ENCODE measurements at regions of chr2 and their contacts with region 1.

Region 1: DNA sequence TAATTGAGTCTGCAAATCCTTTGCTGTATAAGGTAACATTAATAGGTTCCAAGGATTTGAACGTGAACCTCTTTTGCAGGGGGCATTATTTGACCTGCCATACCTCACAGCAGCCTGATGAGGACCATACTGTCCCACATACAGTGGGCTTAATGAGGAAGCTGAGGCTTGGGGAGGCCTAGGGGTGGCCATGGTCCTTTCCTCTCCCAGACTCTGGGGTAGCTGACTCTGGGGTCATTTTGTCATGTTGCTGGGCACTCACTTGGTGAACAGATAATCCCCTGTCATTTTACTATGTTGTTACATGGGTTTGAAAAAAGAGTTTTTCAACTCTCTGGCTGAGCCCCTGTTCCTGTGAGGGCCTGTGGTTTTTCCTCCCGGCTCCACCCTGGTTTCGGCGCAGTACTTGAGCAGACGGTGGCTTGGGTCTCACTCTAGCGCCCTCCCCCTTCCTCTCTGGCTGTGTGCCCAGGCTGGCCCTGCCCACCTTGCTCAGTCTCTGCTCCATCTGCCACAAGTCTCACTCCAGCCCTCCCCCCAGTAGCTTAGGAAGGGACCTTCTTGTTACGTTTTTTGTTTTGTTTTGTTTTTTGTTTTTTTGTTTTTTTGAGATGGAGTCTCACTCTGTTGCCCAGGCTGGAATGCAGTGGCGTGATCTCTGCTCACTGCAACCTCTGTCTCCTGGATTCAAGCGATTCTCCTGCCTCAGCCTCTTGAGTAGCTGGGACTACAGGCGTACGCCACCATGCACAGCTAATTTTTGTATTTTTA is 21.0 kb downstream of the INPP4A start:
- DNase-seq: peak; percentile 84 to 93 (median 84)
- H3K4me3 ChIP-seq: peak overlapping the region; percentile 17 to 33
- H3K4me3 Mint-ChIP-seq: peak overlapping the region; percentile 80 to 98 (median 90)
- H3K27ac ChIP-seq: peak overlapping the region; percentile 71
- H3K27ac Mint-ChIP-seq: peak overlapping the region; percentile 92 to 98 (median 97)
- H3K4me1 ChIP-seq: peaks cover 96% of the 10 kb centered on the region
- H3K4me1 Mint-ChIP-seq: peaks cover 71 to 93% (median 82%) of the 10 kb centered on the region in 4 donors
- H3K27me3 ChIP-seq: no peaks in the 10 kb centered on the region
- H3K27me3 Mint-ChIP-seq: no peaks in the 10 kb centered on the region

Region 2: GRCh38 chr2:97798416-97798815 is 667.2 kb before region 1 on chr2:
- CTCF ChIA-PET with region 1: no interaction called
- POLR2A ChIA-PET with region 1: no interaction called
- intact Hi-C with region 1: no loop called
- DNase-seq: no peak
- H3K4me3 ChIP-seq: no peak overlapping the region
- H3K4me3 Mint-ChIP-seq: no peak overlapping the region
- H3K27ac ChIP-seq: no peak overlapping the region
- H3K27ac Mint-ChIP-seq: no peak overlapping the region
- H3K4me1 ChIP-seq: no peaks in the 10 kb centered on the region
- H3K4me1 Mint-ChIP-seq: no peaks in the 10 kb centered on the region
- H3K27me3 ChIP-seq: no peaks in the 10 kb centered on the region
- H3K27me3 Mint-ChIP-seq: no peaks in the 10 kb centered on the region

Region 3: DNA sequence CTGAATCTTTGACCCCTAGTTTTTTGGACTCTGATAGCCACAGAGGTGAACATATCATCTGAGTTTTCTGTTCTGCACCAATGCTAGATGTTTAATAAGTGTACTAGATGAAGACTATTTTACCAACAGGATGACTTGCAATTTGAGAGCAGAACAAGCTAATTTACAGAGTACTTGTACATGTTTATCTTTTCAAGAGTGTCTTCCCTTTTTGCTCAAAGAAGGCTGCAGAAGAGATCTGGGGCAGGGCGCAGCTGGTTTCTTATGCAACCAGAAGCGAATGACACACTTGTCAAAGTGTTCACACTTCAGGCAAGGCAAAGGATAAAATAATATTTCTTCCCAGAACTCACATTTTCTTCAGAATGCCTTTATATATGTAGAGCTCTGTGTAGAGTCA is 292.7 kb before region 1 on chr2:
- CTCF ChIA-PET with region 1: no interaction called
- POLR2A ChIA-PET with region 1: no interaction called
- intact Hi-C with region 1: no loop called
- DNase-seq: no peak
- H3K4me3 ChIP-seq: no peak overlapping the region
- H3K4me3 Mint-ChIP-seq: no peak overlapping the region
- H3K27ac ChIP-seq: no peak overlapping the region
- H3K27ac Mint-ChIP-seq: no peak overlapping the region
- H3K4me1 ChIP-seq: no peaks in the 10 kb centered on the region
- H3K4me1 Mint-ChIP-seq: peaks cover 0 to 3% (median 0%) of the 10 kb centered on the region in 4 donors
- H3K27me3 ChIP-seq: no peaks in the 10 kb centered on the region
- H3K27me3 Mint-ChIP-seq: peaks cover 20 to 43% of the 10 kb centered on the region in 2 donors

Region 4: GRCh38 chr2:98455494-98455976 is 10.1 kb before region 1 on chr2:
- CTCF ChIA-PET with region 1: interaction called, 32 read pairs
- POLR2A ChIA-PET with region 1: interaction called, 338 read pairs
- intact Hi-C with region 1: loop called (anchors 1 kb)
- DNase-seq: peak; percentile 48 to 86 (median 64)
- H3K4me3 ChIP-seq: peak overlapping the region in 1 of 2 donors; percentile 18
- H3K4me3 Mint-ChIP-seq: peak overlapping the region; percentile 11 to 84 (median 69)
- H3K27ac ChIP-seq: peak overlapping the region; percentile 69
- H3K27ac Mint-ChIP-seq: peak overlapping the region; percentile 85 to 97 (median 94)
- H3K4me1 ChIP-seq: peaks cover 99% of the 10 kb centered on the region
- H3K4me1 Mint-ChIP-seq: peaks cover 80 to 100% (median 92%) of the 10 kb centered on the region in 4 donors
- H3K27me3 ChIP-seq: no peaks in the 10 kb centered on the region
- H3K27me3 Mint-ChIP-seq: no peaks in the 10 kb centered on the region

Region 5: DNA sequence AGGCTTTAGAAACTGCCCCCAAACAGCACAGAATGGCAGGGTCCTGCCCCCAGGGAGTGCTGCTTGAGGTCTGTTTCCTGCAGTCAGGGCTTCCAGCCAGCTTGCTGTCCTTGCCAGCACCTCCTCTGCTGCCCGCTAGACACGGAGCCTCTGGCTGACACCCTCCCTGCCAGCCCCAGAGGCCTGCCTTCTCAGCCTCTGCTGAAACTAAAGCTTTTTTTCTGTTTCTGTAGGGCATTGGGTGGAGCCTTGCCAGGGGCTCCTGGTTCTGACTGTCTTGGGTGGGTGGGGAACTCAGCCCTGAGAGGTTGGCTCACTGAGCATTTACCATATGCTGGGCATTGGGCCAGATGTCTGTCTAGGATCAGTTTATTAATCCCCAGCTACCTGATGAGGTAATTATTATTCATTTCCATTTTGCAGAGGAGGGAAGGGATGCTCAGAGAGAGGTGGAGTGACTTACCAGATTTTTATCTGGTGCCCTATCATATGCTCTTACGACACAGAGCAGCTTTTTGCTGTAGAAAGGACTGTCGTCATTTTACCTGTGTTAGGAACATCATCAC is 14.4 kb after region 1 on chr2:
- CTCF ChIA-PET with region 1: interaction called, 81 read pairs
- POLR2A ChIA-PET with region 1: interaction called, 327 read pairs
- intact Hi-C with region 1: loop called (anchors 2 kb)
- DNase-seq: peak in 3 of 5 donors; percentile 33 to 89 (median 42)
- H3K4me3 ChIP-seq: no peak overlapping the region
- H3K4me3 Mint-ChIP-seq: peak overlapping the region; percentile 41 to 75 (median 72)
- H3K27ac ChIP-seq: peak overlapping the region; percentile 61
- H3K27ac Mint-ChIP-seq: peak overlapping the region; percentile 91 to 95 (median 93)
- H3K4me1 ChIP-seq: peaks cover 100% of the 10 kb centered on the region
- H3K4me1 Mint-ChIP-seq: peaks cover 84 to 100% (median 93%) of the 10 kb centered on the region in 4 donors
- H3K27me3 ChIP-seq: no peaks in the 10 kb centered on the region
- H3K27me3 Mint-ChIP-seq: no peaks in the 10 kb centered on the region

Region 6: GRCh38 chr2:98487806-98488651 is 22.4 kb after region 1 on chr2:
- CTCF ChIA-PET with region 1: interaction called, 81 read pairs
- POLR2A ChIA-PET with region 1: interaction called, 327 read pairs
- intact Hi-C with region 1: no loop called
- DNase-seq: peak in 4 of 5 donors; percentile 52 to 58 (median 56)
- H3K4me3 ChIP-seq: no peak overlapping the region
- H3K4me3 Mint-ChIP-seq: peak overlapping the region in 6 of 8 donors; percentile 3 to 61 (median 46)
- H3K27ac ChIP-seq: no peak overlapping the region
- H3K27ac Mint-ChIP-seq: peak overlapping the region; percentile 32 to 81 (median 70)
- H3K4me1 ChIP-seq: peaks cover 84% of the 10 kb centered on the region
- H3K4me1 Mint-ChIP-seq: peaks cover 74 to 100% (median 85%) of the 10 kb centered on the region in 4 donors
- H3K27me3 ChIP-seq: no peaks in the 10 kb centered on the region
- H3K27me3 Mint-ChIP-seq: no peaks in the 10 kb centered on the region

Region 7: DNA sequence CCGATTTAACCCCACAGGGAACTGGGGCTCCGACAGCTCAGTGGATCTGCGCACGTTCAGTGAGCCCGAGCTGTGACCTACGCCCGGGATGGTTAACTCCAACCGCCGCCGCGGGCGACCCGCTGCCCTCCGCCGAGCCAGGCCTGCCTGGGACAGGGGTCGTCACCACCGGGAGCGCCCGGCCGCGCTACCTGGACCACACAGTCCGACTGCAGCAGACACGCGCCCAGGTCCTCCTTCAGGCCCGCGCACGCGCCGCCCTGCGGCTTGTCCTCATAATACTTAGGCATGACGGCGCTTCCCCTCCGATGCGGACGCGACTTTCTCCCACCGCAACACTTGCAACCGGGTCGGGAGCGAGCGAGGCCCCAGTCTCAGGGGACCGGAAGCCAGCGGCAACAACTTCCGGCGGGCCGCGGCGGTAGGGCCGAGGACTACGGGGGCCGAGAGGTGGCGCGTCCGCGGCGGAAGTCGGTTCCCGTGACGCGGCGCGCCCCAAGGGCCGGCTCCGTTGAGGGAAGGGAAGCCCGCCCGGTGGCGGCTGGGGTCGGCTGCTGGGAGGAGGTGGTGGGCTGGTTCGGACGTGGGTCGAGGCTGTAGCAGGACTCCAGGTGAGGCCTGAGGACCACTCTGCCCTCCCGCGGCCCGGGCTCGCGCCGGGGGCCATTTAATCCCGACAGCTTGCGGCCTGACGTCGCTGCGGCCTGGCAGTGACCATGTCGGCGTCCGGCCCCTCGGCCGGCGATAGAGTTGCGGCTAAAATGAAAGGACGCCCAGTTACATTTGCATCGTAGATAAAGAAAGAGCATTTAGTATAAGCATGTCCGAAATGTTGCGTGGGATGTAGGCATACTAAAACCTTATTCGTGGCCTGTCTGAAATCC is 142.7 kb after region 1 on chr2 and contains the starts of genes COA5 and UNC50:
- CTCF ChIA-PET with region 1: no interaction called
- POLR2A ChIA-PET with region 1: interaction called, 3 read pairs
- intact Hi-C with region 1: loop called (anchors 5 kb)
- DNase-seq: peak; percentile 87 to 91 (median 88)
- H3K4me3 ChIP-seq: peak within 1 kb of the TSS; percentile 86 to 93
- H3K4me3 Mint-ChIP-seq: peak within 1 kb of the TSS; percentile 79 to 95 (median 89)
- H3K27ac ChIP-seq: peak within 1 kb of the TSS; percentile 88
- H3K27ac Mint-ChIP-seq: peak within 1 kb of the TSS; percentile 89 to 97 (median 91)
- H3K4me1 ChIP-seq: peaks cover 61% of the 10 kb centered on the region
- H3K4me1 Mint-ChIP-seq: peaks cover 51 to 91% (median 59%) of the 10 kb centered on the region in 4 donors
- H3K27me3 ChIP-seq: no peaks in the 10 kb centered on the region
- H3K27me3 Mint-ChIP-seq: no peaks in the 10 kb centered on the region
- total RNA-seq, gene COA5: 51.3 to 52.4 TPM
- total RNA-seq, gene UNC50: 43.5 to 47.2 TPM

Region 8: DNA sequence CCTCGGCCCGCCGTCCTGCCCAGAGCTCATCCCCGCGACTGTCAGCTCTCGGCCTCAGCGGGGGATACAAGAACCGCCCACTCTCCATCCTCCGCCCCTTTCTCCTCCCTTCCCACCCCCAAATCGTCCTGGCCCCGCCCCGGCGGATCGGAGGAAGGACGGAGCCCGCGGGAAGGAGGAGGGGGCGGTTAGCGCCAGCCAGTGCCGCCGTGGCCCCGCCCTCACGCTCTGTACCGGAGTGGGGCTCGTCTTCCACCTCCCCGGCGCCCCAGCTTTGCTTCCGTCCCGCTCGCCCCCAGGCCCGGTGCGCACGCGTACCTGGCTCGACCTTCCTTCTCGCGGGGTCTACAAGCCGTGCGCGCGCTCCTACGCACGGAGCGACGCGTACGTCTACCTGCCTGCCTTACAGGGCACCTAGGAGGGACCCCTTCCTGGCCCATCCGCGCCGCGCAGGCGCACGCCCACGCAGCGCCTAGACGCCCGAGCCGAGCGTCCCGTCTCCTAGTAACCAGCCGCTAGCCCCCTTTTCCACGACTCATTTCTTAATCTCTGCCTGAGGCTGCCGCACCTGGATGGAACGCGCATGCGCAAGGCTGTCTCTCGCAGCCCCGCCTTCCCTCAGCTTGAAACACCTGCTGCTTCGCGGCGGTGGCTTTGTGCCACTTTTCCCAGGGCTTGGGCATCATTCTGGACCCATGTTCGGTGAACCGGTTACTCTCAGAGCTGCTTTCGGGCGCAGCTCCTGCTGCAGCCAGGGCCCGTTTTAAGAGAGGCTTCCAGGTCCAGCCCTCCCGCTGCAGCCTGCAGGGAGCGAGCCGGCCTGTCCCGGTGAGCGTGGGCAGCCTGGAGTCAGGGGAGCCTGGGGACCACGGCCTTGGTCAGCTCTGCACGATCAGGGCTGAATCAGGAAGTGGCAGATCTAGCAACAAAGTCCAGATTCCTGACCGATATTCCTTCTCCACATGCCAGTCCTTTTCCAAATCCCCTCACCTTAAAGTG is 675.8 kb after region 1 on chr2 and contains the start of gene C2orf15:
- CTCF ChIA-PET with region 1: no interaction called
- POLR2A ChIA-PET with region 1: interaction called, 10 read pairs
- intact Hi-C with region 1: no loop called
- DNase-seq: peak; percentile 97 to 98 (median 97)
- H3K4me3 ChIP-seq: peak within 1 kb of the TSS; percentile 50 to 97
- H3K4me3 Mint-ChIP-seq: peak within 1 kb of the TSS; percentile 93 to 99 (median 96)
- H3K27ac ChIP-seq: peak within 1 kb of the TSS; percentile 86
- H3K27ac Mint-ChIP-seq: peak within 1 kb of the TSS; percentile 96 to 99 (median 98)
- H3K4me1 ChIP-seq: peaks cover 18% of the 10 kb centered on the region
- H3K4me1 Mint-ChIP-seq: peaks cover 11 to 31% (median 17%) of the 10 kb centered on the region in 4 donors
- H3K27me3 ChIP-seq: no peaks in the 10 kb centered on the region
- H3K27me3 Mint-ChIP-seq: no peaks in the 10 kb centered on the region
- total RNA-seq, gene C2orf15: 2.3 to 3.2 TPM

Measured in CD4-positive, alpha-beta memory T cell (primary cell).